ENCODE measurements at regions of chr15 and their contacts with region 1.

Region 1: DNA sequence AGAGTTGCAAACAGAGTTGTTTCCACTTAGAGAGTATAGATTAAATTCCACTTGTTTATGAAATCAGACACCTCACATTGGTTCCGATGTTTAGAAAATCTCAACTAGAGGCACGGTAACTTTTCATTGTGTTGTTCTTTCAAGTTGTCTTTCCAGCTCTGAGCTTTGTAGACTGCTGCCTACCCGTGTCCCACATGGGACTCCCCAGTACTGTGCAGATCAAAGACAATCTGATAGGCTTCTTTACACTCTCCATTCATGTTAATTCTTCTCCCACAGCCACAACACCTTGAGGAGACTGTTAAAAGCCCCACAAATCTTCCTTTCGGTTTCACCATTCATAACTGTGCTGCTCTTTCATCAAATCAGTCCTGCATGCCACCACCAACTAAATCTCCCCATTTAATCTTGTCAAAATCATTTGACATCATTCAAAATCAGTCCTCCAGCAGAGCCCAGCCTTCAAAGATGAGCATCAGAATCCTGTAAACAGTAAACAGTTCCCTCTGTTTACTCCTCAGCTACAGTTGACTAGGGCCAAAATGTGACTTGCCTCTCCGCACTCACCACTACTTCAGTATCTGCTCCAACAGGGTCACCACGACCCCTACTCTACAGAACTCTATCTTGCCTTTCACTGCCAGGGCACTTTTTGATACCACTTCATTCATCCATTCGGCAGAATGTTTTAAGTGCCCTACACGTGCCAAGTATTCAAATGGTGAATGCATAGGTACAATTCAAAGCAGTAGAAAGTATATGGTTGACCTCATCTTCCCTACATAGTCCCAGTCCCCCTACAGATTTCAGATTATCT is 8.3 kb downstream of the ANXA2 start:
- DNase-seq: peak; percentile 60
- H3K4me3 Mint-ChIP-seq: peak overlapping the region; percentile 34
- H3K27ac Mint-ChIP-seq: peak overlapping the region; percentile 81
- H3K4me1 Mint-ChIP-seq: peaks cover 73% of the 10 kb centered on the region
- H3K27me3 Mint-ChIP-seq: no peaks in the 10 kb centered on the region

Region 2: GRCh38 chr15:60251229-60251628 is 138.2 kb before region 1 on chr15:
- intact Hi-C with region 1: no loop called
- DNase-seq: no peak
- H3K4me3 Mint-ChIP-seq: no peak overlapping the region
- H3K27ac Mint-ChIP-seq: no peak overlapping the region
- H3K4me1 Mint-ChIP-seq: peaks cover 9% of the 10 kb centered on the region
- H3K27me3 Mint-ChIP-seq: peaks cover 36% of the 10 kb centered on the region

Region 3: DNA sequence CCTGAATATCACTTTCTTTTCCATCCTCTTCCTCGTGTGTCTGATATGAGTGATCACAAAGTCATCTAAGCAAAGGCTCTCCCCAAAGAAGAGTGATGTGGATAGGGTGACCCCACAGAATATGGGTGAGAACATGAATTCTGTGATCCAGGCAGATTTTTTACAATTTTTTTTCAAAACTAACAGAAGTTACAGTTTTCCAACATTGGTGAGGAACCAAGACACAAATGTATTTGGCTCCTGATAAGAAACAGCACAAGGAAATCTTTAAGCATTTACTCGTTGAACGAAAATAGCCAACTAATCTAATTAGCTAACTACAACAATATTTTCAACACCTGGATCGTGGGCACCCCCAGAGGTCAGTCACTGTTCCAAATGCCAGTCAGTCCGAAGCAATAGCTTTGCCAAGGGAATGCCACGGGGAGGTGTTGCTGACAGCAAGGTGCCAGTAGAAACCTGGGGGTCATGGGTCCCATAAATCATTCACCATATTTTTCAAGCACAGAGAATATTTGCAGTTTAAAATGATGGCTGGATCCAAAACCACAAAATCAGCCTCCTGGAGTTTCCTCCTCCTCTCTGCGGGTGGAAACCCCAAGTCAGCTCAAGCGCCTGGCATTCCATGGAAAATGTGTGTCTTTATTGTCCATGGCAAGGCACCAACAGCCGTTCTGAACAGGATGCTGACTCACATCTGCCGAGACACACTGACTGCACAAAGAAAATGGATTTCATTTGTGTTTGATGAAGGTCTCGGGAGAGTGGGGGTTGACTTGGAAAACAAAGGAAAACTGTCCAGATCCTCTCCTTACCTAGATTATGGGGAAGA is 18.4 kb before region 1 on chr15:
- intact Hi-C with region 1: loop called (anchors 1 kb)
- DNase-seq: no peak
- H3K4me3 Mint-ChIP-seq: peak overlapping the region; percentile 49
- H3K27ac Mint-ChIP-seq: peak overlapping the region; percentile 93
- H3K4me1 Mint-ChIP-seq: peaks cover 47% of the 10 kb centered on the region
- H3K27me3 Mint-ChIP-seq: no peaks in the 10 kb centered on the region

Region 4: GRCh38 chr15:60423537-60423936 is 34.1 kb after region 1 on chr15:
- intact Hi-C with region 1: loop called (anchors 1 kb)
- DNase-seq: no peak
- H3K4me3 Mint-ChIP-seq: no peak overlapping the region
- H3K27ac Mint-ChIP-seq: peak overlapping the region; percentile 11
- H3K4me1 Mint-ChIP-seq: peaks cover 12% of the 10 kb centered on the region
- H3K27me3 Mint-ChIP-seq: no peaks in the 10 kb centered on the region

Region 5: GRCh38 chr15:60478566-60479360 is 89.3 kb after region 1 on chr15 and contains the start of gene ICE2:
- intact Hi-C with region 1: loop called (anchors 1 kb)
- DNase-seq: peak; percentile 95
- H3K4me3 Mint-ChIP-seq: peak within 1 kb of the TSS; percentile 97
- H3K27ac Mint-ChIP-seq: peak within 1 kb of the TSS; percentile 97
- H3K4me1 Mint-ChIP-seq: peaks cover 52% of the 10 kb centered on the region
- H3K27me3 Mint-ChIP-seq: no peaks in the 10 kb centered on the region
- total RNA-seq, gene ICE2: 51.9 and 56.1 TPM in 2 replicates

Region 6: GRCh38 chr15:60520825-60521368 is 131.4 kb after region 1 on chr15:
- intact Hi-C with region 1: loop called (anchors 1 kb)
- DNase-seq: peak; percentile 63
- H3K4me3 Mint-ChIP-seq: no peak overlapping the region
- H3K27ac Mint-ChIP-seq: peak overlapping the region; percentile 71
- H3K4me1 Mint-ChIP-seq: peaks cover 58% of the 10 kb centered on the region
- H3K27me3 Mint-ChIP-seq: no peaks in the 10 kb centered on the region